ENCODE measurements at regions of chr4 and their contacts with region 1.

Region 1: GRCh38 chr4:18593445-18594002 is 572.0 kb upstream of the LCORL start:
- DNase-seq: peak; percentile 51
- H3K4me3 ChIP-seq: no peak overlapping the region
- H3K27ac ChIP-seq: no peak overlapping the region
- H3K4me1 ChIP-seq: no peaks in the 10 kb centered on the region
- H3K27me3 ChIP-seq: no peaks in the 10 kb centered on the region
- CTCF ChIP-seq: peak; percentile 68 to 83

Region 2: GRCh38 chr4:17544205-17544604 is 1049.3 kb before region 1 on chr4:
- CTCF ChIA-PET with region 1: no interaction called
- dilution Hi-C with region 1: no loop called
- in situ Hi-C with region 1: no loop called
- intact Hi-C with region 1: loop called (anchors 1 kb)
- DNase-seq: no peak
- H3K4me3 ChIP-seq: no peak overlapping the region
- H3K27ac ChIP-seq: no peak overlapping the region
- H3K4me1 ChIP-seq: no peaks in the 10 kb centered on the region
- H3K27me3 ChIP-seq: no peaks in the 10 kb centered on the region
- CTCF ChIP-seq: no peak

Region 3: GRCh38 chr4:17597517-17597916 is 996.0 kb before region 1 on chr4:
- CTCF ChIA-PET with region 1: no interaction called
- dilution Hi-C with region 1: no loop called
- in situ Hi-C with region 1: no loop called
- intact Hi-C with region 1: loop called (anchors 1 kb)
- DNase-seq: peak; percentile 41
- H3K4me3 ChIP-seq: no peak overlapping the region
- H3K27ac ChIP-seq: no peak overlapping the region
- H3K4me1 ChIP-seq: no peaks in the 10 kb centered on the region
- H3K27me3 ChIP-seq: no peaks in the 10 kb centered on the region
- CTCF ChIP-seq: peak; percentile 41 to 56

Region 4: DNA sequence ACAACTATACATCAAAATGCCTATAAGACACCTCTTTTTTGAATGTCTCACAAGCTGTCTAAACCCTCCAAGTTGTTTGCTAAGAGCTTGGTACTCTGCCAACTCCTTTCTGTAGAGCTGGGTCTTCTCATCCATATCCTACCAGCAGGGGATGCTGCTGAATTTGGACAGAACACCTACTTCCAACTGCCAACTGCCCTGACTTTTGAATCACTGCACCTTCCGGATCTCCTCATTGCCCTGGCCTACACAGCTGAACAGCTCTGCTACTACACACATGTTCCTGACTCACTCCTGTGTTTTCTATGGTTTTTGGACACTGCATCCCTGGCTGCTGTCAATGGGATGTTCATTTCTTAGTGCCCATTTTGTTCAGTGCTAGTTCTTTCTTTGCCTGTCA is 830.8 kb before region 1 on chr4:
- CTCF ChIA-PET with region 1: no interaction called
- dilution Hi-C with region 1: no loop called
- in situ Hi-C with region 1: no loop called
- intact Hi-C with region 1: loop called (anchors 5 kb)
- DNase-seq: peak; percentile 67
- H3K4me3 ChIP-seq: no peak overlapping the region
- H3K27ac ChIP-seq: no peak overlapping the region
- H3K4me1 ChIP-seq: no peaks in the 10 kb centered on the region
- H3K27me3 ChIP-seq: no peaks in the 10 kb centered on the region
- CTCF ChIP-seq: peak; percentile 54 to 78

Region 5: GRCh38 chr4:17817020-17817419 is 776.5 kb before region 1 on chr4:
- CTCF ChIA-PET with region 1: interaction called, 4 read pairs
- dilution Hi-C with region 1: no loop called
- in situ Hi-C with region 1: loop called (anchors 10 to 25 kb)
- intact Hi-C with region 1: loop called (anchors 1 kb)
- DNase-seq: peak; percentile 53
- H3K4me3 ChIP-seq: no peak overlapping the region
- H3K27ac ChIP-seq: no peak overlapping the region
- H3K4me1 ChIP-seq: peaks cover 9% of the 10 kb centered on the region
- H3K27me3 ChIP-seq: no peaks in the 10 kb centered on the region
- CTCF ChIP-seq: peak; percentile 47 to 55